ENCODE measurements at regions of chr6 and their contacts with region 1.

Region 1: GRCh38 chr6:39882531-39882899 is 51.7 kb downstream of the MOCS1 start:
- DNase-seq: peak in 4 of 10 donors; percentile 34 to 63 (median 49)
- H3K4me3 ChIP-seq: peak overlapping the region in 2 of 59 donors; percentile 15 to 24
- H3K27ac ChIP-seq: peak overlapping the region; percentile 7 to 96 (median 84)
- H3K27me3 ChIP-seq: no peaks in the 10 kb centered on the region
- CTCF ChIP-seq: no peak

Region 2: GRCh38 chr6:39812853-39813533 is 69.5 kb before region 1 on chr6:
- intact Hi-C with region 1: loop called in 1 of 2 experiments (anchors 5 kb)
- DNase-seq: no peak
- H3K4me3 ChIP-seq: peak overlapping the region in 1 of 59 donors; percentile 5
- H3K27ac ChIP-seq: peak overlapping the region in 55 of 59 donors; percentile 5 to 98 (median 76)
- H3K27me3 ChIP-seq: no peaks in the 10 kb centered on the region
- CTCF ChIP-seq: peak in 30 of 56 donors; percentile 7 to 60 (median 26)

Region 3: DNA sequence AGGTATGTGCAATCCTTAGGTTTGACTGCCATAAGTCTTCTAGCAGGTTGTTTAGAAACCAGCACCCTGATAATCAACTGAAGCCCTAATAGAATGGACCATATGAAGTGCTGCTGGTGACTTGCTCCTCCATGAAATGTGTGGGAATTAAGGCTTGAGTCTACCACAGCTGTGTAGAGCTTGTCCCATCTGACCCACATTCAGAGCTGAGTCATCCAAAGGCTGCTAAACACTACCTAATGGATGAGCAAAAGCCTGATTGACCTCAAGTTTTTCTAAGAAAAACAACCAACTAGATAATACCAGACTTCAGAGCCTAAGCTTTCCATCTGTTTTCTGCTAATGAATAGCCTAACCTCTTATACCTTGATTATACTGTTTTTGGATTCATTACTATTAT is 172.1 kb after region 1 on chr6:
- intact Hi-C with region 1: no loop called
- DNase-seq: no peak
- H3K4me3 ChIP-seq: no peak overlapping the region
- H3K27ac ChIP-seq: no peak overlapping the region
- H3K27me3 ChIP-seq: peaks cover 0 to 4% (median 0%) of the 10 kb centered on the region in 45 donors
- CTCF ChIP-seq: no peak

Measured in dorsolateral prefrontal cortex (tissue), 120 donors.